ENCODE measurements at regions of chr2 and their contacts with region 1.

Region 1: DNA sequence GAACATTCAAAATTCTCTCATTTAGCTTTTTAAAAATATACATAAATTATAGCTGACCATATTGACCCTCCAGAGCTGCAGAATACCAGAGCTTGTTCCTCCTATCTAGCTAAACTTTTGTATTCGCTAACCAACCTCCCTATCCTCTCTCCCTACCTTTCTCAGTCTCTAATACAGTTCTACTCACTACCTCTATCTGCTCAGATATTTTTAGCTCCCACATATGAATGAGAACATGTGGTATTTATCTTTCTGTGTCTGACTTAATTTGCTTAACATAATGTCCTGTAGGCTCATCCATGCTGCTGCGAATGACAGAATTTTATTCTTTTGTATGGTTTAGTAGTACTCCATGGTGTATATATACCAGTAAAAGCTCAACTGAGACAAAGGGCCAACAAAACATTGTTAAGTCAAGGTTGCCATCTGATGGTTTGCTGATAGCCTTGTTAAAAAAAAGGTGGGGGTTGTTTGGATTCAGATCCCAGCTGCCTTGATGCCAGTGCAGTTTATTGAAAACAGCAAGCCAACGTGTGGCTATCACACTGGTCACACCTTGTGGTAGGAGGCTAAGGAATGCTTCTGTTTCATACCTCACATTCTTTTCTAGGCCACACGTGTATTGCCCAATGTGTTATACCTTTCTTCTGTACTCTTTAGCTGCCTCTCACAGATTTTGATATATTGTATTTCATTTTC is 101.5 kb downstream of the VWA3B start:
- DNase-seq: no peak
- ATAC-seq: no peak
- H3K4me3 ChIP-seq: no peak overlapping the region
- H3K27ac ChIP-seq: no peak overlapping the region
- H3K4me1 ChIP-seq: no peaks in the 10 kb centered on the region; the same call in 1 of the 2 replicates
- H3K27me3 ChIP-seq: no peaks in the 10 kb centered on the region; a peak in 1 of 4 replicates
- CTCF ChIP-seq: peak in 2 of 3 experiments; percentile 21 to 34; a peak in 3 of 6 replicates
- EP300 ChIP-seq: no peak
- POLR2A ChIP-seq: no peak
- RAD21 ChIP-seq: peak; percentile 51

Region 2: GRCh38 chr2:98253461-98254070 is 65.1 kb after region 1 on chr2:
- CTCF ChIA-PET with region 1: no interaction called
- POLR2A ChIA-PET with region 1: no interaction called
- RAD21 ChIA-PET with region 1: no interaction called
- SMC1A ChIA-PET with region 1: no interaction called
- in situ Hi-C with region 1: no loop called
- intact Hi-C with region 1: no loop called
- DNase-seq: no peak
- ATAC-seq: no peak
- H3K4me3 ChIP-seq: no peak overlapping the region
- H3K27ac ChIP-seq: no peak overlapping the region
- H3K4me1 ChIP-seq: no peaks in the 10 kb centered on the region
- H3K27me3 ChIP-seq: no peaks in the 10 kb centered on the region
- CTCF ChIP-seq: no peak
- EP300 ChIP-seq: no peak
- POLR2A ChIP-seq: no peak
- RAD21 ChIP-seq: no peak

Region 3: GRCh38 chr2:98295721-98296414 is 107.4 kb after region 1 on chr2:
- CTCF ChIA-PET with region 1: no interaction called
- POLR2A ChIA-PET with region 1: no interaction called
- RAD21 ChIA-PET with region 1: no interaction called
- SMC1A ChIA-PET with region 1: no interaction called
- in situ Hi-C with region 1: loop called (anchors 10 kb)
- intact Hi-C with region 1: no loop called
- DNase-seq: no peak
- ATAC-seq: no peak
- H3K4me3 ChIP-seq: no peak overlapping the region
- H3K27ac ChIP-seq: no peak overlapping the region
- H3K4me1 ChIP-seq: no peaks in the 10 kb centered on the region
- H3K27me3 ChIP-seq: peaks cover 0 to 4% of the 10 kb centered on the region in 2 experiments; a peak in 3 of 4 replicates
- CTCF ChIP-seq: 0 out of 6 replicates have a peak, but pooled peaks of 1 of the 3 experiments have one; percentile 8
- EP300 ChIP-seq: no peak
- POLR2A ChIP-seq: no peak
- RAD21 ChIP-seq: no peak

Region 4: GRCh38 chr2:98308068-98308467 is 119.6 kb after region 1 on chr2:
- CTCF ChIA-PET with region 1: no interaction called
- POLR2A ChIA-PET with region 1: no interaction called
- RAD21 ChIA-PET with region 1: no interaction called
- SMC1A ChIA-PET with region 1: no interaction called
- in situ Hi-C with region 1: no loop called
- intact Hi-C with region 1: no loop called
- DNase-seq: no peak
- ATAC-seq: no peak
- H3K4me3 ChIP-seq: no peak overlapping the region
- H3K27ac ChIP-seq: no peak overlapping the region
- H3K4me1 ChIP-seq: no peaks in the 10 kb centered on the region
- H3K27me3 ChIP-seq: peaks cover 2 to 7% of the 10 kb centered on the region in 2 experiments; a peak in 3 of 4 replicates
- CTCF ChIP-seq: no peak
- EP300 ChIP-seq: no peak
- POLR2A ChIP-seq: no peak
- RAD21 ChIP-seq: no peak

Region 5: GRCh38 chr2:98476192-98476868 is 287.8 kb after region 1 on chr2:
- CTCF ChIA-PET with region 1: no interaction called
- POLR2A ChIA-PET with region 1: no interaction called
- RAD21 ChIA-PET with region 1: no interaction called
- SMC1A ChIA-PET with region 1: no interaction called
- in situ Hi-C with region 1: no loop called
- intact Hi-C with region 1: no loop called
- DNase-seq: no peak
- ATAC-seq: peak; percentile 49
- H3K4me3 ChIP-seq: no peak overlapping the region
- H3K27ac ChIP-seq: peak overlapping the region; percentile 88
- H3K4me1 ChIP-seq: peaks cover 98% of the 10 kb centered on the region
- H3K27me3 ChIP-seq: no peaks in the 10 kb centered on the region; a peak in 1 of 4 replicates
- CTCF ChIP-seq: no peak
- EP300 ChIP-seq: peak; percentile 62 to 73; a peak in 3 of 4 replicates
- POLR2A ChIP-seq: no peak
- RAD21 ChIP-seq: no peak

Region 6: DNA sequence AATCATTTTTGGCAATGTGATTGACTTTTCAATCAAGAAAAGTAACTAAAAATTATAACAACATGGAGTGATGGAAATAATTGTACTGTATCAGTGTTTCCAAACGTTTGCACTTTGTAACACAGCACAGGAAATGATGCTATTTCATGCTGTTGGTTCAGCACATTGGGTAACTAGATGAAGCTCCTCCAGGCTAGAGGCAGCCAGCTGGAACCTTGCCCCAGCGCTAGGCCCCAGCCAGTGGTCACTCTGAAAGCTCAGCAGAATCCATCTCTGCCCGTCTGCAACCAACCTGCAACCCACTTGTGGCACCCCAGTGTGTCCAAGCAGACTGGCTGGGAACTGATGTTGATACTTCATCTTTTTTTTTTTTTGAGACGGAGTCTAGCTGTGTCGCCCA is 435.2 kb after region 1 on chr2:
- CTCF ChIA-PET with region 1: no interaction called
- POLR2A ChIA-PET with region 1: no interaction called
- RAD21 ChIA-PET with region 1: no interaction called
- SMC1A ChIA-PET with region 1: no interaction called
- in situ Hi-C with region 1: no loop called
- intact Hi-C with region 1: no loop called
- DNase-seq: no peak
- ATAC-seq: peak; percentile 88
- H3K4me3 ChIP-seq: no peak overlapping the region
- H3K27ac ChIP-seq: no peak overlapping the region
- H3K4me1 ChIP-seq: no peaks in the 10 kb centered on the region
- H3K27me3 ChIP-seq: no peaks in the 10 kb centered on the region; a peak in 1 of 4 replicates
- CTCF ChIP-seq: no peak
- EP300 ChIP-seq: no peak
- POLR2A ChIP-seq: no peak
- RAD21 ChIP-seq: no peak